Panc1 (cell line): ENCODE measurements at regions of chr7 and their contacts with region 1.

Region 1: GRCh38 chr7:1225441-1226185 is 7.1 kb upstream of the UNCX start:
- DNase-seq: no peak
- ATAC-seq: peak; percentile 74
- H3K4me3 ChIP-seq: no peak overlapping the region
- H3K27ac ChIP-seq: no peak overlapping the region
- H3K4me1 ChIP-seq: no peaks in the 10 kb centered on the region; the same call in 1 of the 2 replicates
- H3K27me3 ChIP-seq: no peaks in the 10 kb centered on the region
- CTCF ChIP-seq: peak; percentile 100

Region 2: GRCh38 chr7:1377103-1377909 is 151.7 kb after region 1 on chr7:
- CTCF ChIA-PET with region 1: no interaction called
- POLR2A ChIA-PET with region 1: no interaction called
- in situ Hi-C with region 1: no loop called
- intact Hi-C with region 1: loop called (anchors 10 kb)
- DNase-seq: peak; percentile 17
- ATAC-seq: peak; percentile 82
- H3K4me3 ChIP-seq: no peak overlapping the region
- H3K27ac ChIP-seq: no peak overlapping the region
- H3K4me1 ChIP-seq: no peaks in the 10 kb centered on the region
- H3K27me3 ChIP-seq: no peaks in the 10 kb centered on the region
- CTCF ChIP-seq: no peak; the same call in 1 of the 2 replicates